CD4-positive, alpha-beta T cell (primary cell): ENCODE measurements at regions of chr1 and their contacts with region 1.

Region 1: GRCh38 chr1:13725714-13726175 is 25.8 kb downstream of the PRDM2 start:
- DNase-seq: peak; percentile 35 to 83 (median 60)
- ATAC-seq: peak; percentile 51
- H3K4me3 ChIP-seq: no peak overlapping the region
- H3K4me3 Mint-ChIP-seq: no peak overlapping the region
- H3K27ac ChIP-seq: no peak overlapping the region
- H3K27ac Mint-ChIP-seq: peak overlapping the region; percentile 62
- H3K4me1 ChIP-seq: peaks cover 22% of the 10 kb centered on the region
- H3K4me1 Mint-ChIP-seq: peaks cover 69% of the 10 kb centered on the region
- H3K27me3 ChIP-seq: no peaks in the 10 kb centered on the region
- H3K27me3 Mint-ChIP-seq: no peaks in the 10 kb centered on the region
- CTCF ChIP-seq: peak; percentile 69

Region 2: DNA sequence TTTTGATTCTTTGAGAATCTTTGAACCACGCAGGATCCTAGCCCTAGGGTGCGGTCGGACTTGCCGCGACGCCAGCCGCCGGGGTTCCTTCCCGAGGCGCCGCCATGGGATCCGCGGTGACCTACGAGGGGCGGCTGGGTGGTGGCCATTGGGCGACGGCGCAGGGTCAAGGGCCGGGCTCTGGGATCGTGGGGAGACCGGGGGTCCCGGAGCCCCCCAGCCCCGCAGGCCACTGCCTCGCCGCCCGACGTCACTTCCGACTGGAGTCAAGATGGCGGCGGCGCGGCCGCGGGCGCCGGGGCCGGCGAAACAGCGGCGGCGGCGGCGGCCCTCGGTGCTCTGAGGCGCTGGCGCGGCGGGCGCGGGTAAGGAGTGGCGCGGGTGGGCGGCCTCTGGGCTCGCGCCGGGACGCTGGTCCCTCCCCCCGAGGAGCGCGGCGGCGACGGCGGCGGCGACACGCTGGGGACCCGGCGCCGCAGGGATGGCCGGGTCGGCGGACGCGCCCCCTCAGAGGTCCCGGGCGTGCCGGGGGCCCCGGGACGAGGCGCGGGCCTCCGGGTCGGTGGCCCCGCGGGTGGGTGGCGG is 25.7 kb before region 1 on chr1 and contains the start of gene PRDM2:
- CTCF ChIA-PET with region 1: interaction called, 13 read pairs
- POLR2A ChIA-PET with region 1: interaction called, 25 read pairs
- intact Hi-C with region 1: loop called (anchors 1 to 2 kb)
- DNase-seq: peak; percentile 28 to 86 (median 50)
- ATAC-seq: peak; percentile 40
- H3K4me3 ChIP-seq: peak within 1 kb of the TSS; percentile 87
- H3K4me3 Mint-ChIP-seq: peak within 1 kb of the TSS; percentile 93
- H3K27ac ChIP-seq: peak within 1 kb of the TSS; percentile 95 to 96
- H3K27ac Mint-ChIP-seq: peak within 1 kb of the TSS; percentile 95
- H3K4me1 ChIP-seq: peaks cover 27% of the 10 kb centered on the region
- H3K4me1 Mint-ChIP-seq: peaks cover 53% of the 10 kb centered on the region
- H3K27me3 ChIP-seq: no peaks in the 10 kb centered on the region
- H3K27me3 Mint-ChIP-seq: no peaks in the 10 kb centered on the region
- CTCF ChIP-seq: no peak
- total RNA-seq, gene PRDM2: 136 to 140 TPM

Region 3: DNA sequence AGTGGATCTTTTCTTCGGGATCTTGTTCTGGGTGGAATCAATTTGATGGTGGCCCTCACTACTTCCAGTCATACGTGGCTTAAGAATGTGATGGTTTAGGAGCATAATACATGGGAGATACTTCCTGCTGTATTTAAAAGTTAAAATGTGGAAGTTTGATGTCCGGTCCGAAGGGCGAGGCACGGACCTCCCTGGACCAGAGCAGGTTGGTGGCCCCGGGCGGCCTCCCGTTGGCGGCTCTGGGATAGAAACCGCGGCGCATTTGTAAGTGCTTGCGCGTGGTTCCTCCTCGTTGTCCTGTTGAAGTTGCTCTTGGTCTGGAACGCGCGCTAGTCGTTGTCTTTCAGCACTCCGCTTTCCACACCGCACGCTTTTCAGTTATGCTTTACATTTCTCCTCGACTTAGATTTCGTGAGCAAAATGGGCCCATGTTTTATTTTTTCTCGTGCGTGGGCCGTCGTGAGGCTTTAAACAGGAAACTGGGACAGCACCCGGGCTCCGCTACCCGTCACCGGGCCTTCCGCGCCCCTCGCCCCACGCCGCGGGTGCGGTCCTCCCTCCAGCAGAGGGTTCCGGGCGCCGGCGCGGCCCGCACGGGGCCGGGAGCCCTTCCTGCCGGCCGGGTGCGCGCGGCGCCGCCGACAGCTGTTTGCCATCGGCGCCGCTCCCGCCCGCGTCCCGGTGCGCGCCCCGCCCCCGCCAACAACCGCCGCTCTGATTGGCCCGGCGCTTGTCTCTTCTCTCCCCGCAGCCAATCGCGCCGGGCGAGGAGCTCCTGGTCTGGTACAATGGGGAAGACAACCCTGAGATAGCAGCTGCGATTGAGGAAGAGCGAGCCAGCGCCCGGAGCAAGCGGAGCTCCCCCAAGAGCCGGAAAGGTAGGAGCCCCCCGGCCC is 23.1 kb after region 1 on chr1:
- CTCF ChIA-PET with region 1: interaction called, 17 read pairs
- POLR2A ChIA-PET with region 1: interaction called, 171 read pairs
- intact Hi-C with region 1: no loop called
- DNase-seq: peak; percentile 91 to 98 (median 96)
- ATAC-seq: peak; percentile 88
- H3K4me3 ChIP-seq: peak overlapping the region; percentile 78
- H3K4me3 Mint-ChIP-seq: peak overlapping the region; percentile 93
- H3K27ac ChIP-seq: peak overlapping the region; percentile 81 to 90
- H3K27ac Mint-ChIP-seq: peak overlapping the region; percentile 95
- H3K4me1 ChIP-seq: peaks cover 24% of the 10 kb centered on the region
- H3K4me1 Mint-ChIP-seq: peaks cover 60% of the 10 kb centered on the region
- H3K27me3 ChIP-seq: no peaks in the 10 kb centered on the region
- H3K27me3 Mint-ChIP-seq: no peaks in the 10 kb centered on the region
- CTCF ChIP-seq: no peak

Region 4: DNA sequence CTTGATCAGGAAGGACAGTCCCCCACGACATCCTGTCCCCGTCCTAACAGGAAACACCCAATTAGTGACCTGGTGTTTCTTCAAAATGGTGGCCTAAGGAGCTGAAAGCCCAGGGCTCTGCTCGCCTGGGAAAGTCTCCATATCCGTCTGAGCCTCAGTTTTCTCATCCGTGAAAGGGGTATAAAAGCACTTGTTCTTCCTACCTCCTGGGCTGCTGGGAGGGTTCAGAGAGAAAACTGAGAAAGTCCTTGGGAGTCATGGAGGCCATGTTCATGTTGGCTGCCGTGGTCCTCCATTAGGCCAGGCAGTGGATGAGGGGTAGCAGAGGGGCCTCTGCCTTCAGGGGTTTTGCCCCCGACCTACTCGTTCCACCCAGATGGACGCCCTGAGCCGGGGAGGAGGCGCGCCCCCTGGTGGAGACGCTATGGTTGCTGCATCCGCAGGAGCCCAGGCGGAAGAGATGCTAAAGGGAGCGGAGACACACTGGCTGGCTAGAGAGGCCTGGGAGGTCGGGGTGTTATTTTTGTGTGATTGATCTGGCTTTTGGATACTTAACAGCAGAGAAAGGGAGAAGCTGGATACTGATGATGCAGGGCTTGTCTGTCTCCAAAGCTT is 87.8 kb after region 1 on chr1:
- CTCF ChIA-PET with region 1: no interaction called
- POLR2A ChIA-PET with region 1: no interaction called
- intact Hi-C with region 1: loop called in 1 of 2 experiments (anchors 5 kb)
- DNase-seq: peak; percentile 35 to 71 (median 50)
- ATAC-seq: peak; percentile 51
- H3K4me3 ChIP-seq: no peak overlapping the region
- H3K4me3 Mint-ChIP-seq: no peak overlapping the region
- H3K27ac ChIP-seq: no peak overlapping the region
- H3K27ac Mint-ChIP-seq: no peak overlapping the region
- H3K4me1 ChIP-seq: peaks cover 13% of the 10 kb centered on the region
- H3K4me1 Mint-ChIP-seq: peaks cover 24% of the 10 kb centered on the region
- H3K27me3 ChIP-seq: no peaks in the 10 kb centered on the region
- H3K27me3 Mint-ChIP-seq: no peaks in the 10 kb centered on the region
- CTCF ChIP-seq: peak; percentile 60